Activated CD4-positive, alpha-beta T cell treated with anti-CD3 and anti-CD28 coated beads, Interleukin-2, amount 10 ng/mL, durations not matched to agents 24 days and 14 days (primary cell): ENCODE measurements at regions of chrX and their contacts with region 1.

Region 1: DNA sequence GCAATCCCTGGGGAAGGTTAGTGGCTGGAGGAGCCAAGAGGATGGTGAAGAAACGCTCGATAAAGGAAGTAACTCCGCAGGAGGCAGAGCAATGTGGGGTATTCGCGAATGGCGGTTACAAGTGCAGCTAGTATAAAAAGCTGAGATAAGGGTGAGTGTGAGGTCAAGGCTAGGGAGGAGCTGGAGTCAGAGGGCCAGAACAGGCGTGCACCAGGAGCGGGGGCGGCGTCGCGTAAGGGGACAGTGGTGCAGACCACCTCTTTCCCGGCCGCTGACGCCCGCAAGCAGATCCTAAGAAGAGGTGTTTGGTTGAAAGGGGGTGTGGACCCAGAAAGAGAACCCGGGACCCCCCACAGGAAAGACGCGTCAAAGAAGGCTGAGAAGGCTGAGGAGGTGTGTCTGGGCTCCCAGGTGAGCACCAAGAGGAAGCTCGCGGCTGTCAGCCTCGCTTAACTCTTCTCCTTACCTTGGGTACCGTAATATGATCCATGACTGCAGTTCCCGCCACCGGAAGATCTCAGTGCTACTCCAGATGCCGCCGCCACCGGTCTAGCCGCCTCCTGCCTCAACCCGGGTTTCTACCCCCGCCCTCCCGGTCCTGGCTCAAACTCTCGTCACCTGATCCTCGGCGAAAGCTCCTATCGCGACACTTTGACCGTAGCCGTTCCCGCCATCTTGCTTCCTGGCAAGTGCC is at the start of gene MTMR8:
- DNase-seq: peak; percentile 92
- H3K4me3 Mint-ChIP-seq: peak within 1 kb of the TSS; percentile 94
- H3K27ac Mint-ChIP-seq: peak within 1 kb of the TSS; percentile 83
- H3K4me1 Mint-ChIP-seq: peaks cover 9% of the 10 kb centered on the region
- H3K27me3 Mint-ChIP-seq: no peaks in the 10 kb centered on the region
- total RNA-seq, gene MTMR8: 2.7 and 4.2 TPM in 2 replicates

Region 2: DNA sequence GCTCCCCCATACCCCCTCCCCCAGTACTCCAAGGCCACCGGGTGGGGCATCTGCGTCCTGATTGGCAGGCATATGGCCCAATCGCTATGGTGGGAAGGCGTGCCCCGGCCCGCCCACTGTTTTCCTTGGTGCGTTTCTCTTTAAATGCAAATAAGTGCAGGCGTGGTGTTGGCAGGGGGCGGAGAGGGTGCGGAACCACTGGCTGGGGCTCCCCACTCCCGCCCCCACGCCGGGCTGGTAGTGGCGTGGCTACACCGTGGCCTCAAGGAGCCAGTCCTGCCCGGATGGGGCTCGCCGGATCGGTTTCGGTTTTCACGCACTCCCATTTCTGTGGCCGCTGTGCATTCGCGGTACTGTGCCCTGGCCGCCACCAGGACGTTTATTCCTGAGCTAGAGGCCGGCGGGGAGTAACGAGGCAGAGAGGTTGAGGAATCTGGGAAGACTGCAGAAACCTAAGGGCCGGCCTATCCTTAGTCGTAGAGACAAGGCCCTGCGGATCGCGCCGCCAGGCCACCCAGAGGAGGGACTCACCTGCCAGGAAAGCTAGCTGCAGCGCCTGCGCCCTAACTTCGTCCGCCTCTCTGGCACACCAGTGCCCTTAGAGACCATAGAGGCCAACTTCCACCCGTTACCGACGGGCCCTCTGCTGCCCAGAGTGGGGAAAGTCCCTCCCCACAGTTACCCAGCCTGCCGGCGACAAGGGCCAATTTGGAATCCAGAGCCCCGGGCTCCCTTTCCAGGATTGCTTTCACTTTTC is 189.1 kb before region 1 on chrX:
- intact Hi-C with region 1: loop called (anchors 1 kb)
- DNase-seq: peak; percentile 96
- H3K4me3 Mint-ChIP-seq: peak overlapping the region; percentile 89
- H3K27ac Mint-ChIP-seq: peak overlapping the region; percentile 94
- H3K4me1 Mint-ChIP-seq: peaks cover 10% of the 10 kb centered on the region
- H3K27me3 Mint-ChIP-seq: no peaks in the 10 kb centered on the region

Region 3: DNA sequence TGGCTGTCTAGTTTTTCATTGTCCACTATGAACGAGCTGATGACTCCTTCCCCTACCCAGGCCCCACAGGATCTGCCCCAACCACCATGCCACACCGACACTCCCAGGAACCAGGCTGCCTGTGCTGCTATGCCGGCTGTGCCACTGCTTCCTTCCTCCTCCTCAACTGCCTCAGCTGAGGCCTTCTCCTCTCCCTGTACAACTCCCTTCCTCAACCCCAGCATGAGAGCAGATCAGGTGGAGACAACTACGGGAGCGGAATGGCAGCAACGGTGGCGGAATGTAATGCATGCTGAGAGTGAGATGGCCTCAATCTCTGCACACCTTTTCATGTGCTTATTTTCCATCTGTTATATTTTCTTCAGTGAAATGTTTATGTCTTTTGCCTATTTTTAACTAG is 88.3 kb before region 1 on chrX:
- intact Hi-C with region 1: no loop called
- DNase-seq: no peak
- H3K4me3 Mint-ChIP-seq: no peak overlapping the region
- H3K27ac Mint-ChIP-seq: no peak overlapping the region
- H3K4me1 Mint-ChIP-seq: no peaks in the 10 kb centered on the region
- H3K27me3 Mint-ChIP-seq: no peaks in the 10 kb centered on the region

Region 4: GRCh38 chrX:64975989-64976672 is 581.1 kb after region 1 on chrX and contains the start of gene ZC4H2:
- intact Hi-C with region 1: loop called (anchors 2 kb)
- DNase-seq: peak; percentile 89
- H3K4me3 Mint-ChIP-seq: peak within 1 kb of the TSS; percentile 89
- H3K27ac Mint-ChIP-seq: peak within 1 kb of the TSS; percentile 79
- H3K4me1 Mint-ChIP-seq: peaks cover 13% of the 10 kb centered on the region
- H3K27me3 Mint-ChIP-seq: no peaks in the 10 kb centered on the region
- total RNA-seq, gene ZC4H2: 8.9 and 11.3 TPM in 2 replicates

Region 5: GRCh38 chrX:65534450-65535292 is 1139.7 kb after region 1 on chrX and contains the start of gene LAS1L:
- intact Hi-C with region 1: loop called (anchors 10 kb)
- DNase-seq: peak; percentile 96
- H3K4me3 Mint-ChIP-seq: peak within 1 kb of the TSS; percentile 99
- H3K27ac Mint-ChIP-seq: peak within 1 kb of the TSS; percentile 100
- H3K4me1 Mint-ChIP-seq: peaks cover 11% of the 10 kb centered on the region
- H3K27me3 Mint-ChIP-seq: no peaks in the 10 kb centered on the region
- total RNA-seq, gene LAS1L: 61.0 and 64.0 TPM in 2 replicates